ENCODE measurements at regions of chr11 and their contacts with region 1.

Region 1: DNA sequence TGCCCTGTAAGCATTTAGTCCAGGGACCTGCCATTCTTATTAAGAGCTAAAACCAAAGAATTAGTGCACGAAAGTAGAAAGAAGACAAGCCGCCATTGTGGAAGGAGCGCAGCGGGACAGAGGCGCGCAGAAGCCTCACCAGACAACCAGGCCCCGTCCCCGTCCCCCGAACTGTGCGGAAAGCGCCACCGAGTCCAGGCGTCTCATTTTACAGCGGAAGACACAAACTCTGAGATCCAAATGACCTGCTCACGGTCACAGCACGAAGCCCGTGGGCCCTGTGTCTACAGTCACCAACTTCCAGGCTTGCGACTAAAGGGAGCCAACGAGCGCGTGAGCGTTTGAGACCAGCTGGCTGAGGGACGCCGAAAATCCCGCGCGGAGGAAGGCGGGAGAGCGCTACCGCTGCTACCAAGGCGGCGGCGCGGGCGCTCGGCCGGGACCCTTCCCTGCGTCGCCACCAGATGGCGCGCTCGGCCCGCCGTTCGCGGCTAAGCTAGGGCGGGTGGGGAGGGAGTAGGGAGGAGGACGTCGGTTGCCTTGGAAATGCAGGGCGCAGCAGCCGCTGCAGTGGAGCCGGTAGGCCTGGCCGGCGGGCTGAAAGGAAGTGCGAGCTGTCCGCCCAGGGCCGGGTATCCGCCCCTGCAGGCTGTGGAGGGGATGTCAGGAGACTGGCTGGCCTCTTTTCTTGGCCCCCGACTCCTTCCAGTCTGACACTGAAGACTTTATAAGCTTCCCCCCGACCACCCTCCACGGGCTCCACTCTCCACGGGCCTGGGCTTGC is 434 bp upstream of the CCDC83 start:
- DNase-seq: peak; percentile 94
- ATAC-seq: peak; percentile 96
- H3K4me3 Mint-ChIP-seq: peak overlapping the region; percentile 76
- H3K27ac Mint-ChIP-seq: peak overlapping the region; percentile 49; the same call in 1 of the 2 replicates
- H3K4me1 Mint-ChIP-seq: peaks cover 11% of the 10 kb centered on the region
- H3K27me3 Mint-ChIP-seq: peaks cover 5% of the 10 kb centered on the region
- CTCF ChIP-seq: peak; percentile 94

Region 2: DNA sequence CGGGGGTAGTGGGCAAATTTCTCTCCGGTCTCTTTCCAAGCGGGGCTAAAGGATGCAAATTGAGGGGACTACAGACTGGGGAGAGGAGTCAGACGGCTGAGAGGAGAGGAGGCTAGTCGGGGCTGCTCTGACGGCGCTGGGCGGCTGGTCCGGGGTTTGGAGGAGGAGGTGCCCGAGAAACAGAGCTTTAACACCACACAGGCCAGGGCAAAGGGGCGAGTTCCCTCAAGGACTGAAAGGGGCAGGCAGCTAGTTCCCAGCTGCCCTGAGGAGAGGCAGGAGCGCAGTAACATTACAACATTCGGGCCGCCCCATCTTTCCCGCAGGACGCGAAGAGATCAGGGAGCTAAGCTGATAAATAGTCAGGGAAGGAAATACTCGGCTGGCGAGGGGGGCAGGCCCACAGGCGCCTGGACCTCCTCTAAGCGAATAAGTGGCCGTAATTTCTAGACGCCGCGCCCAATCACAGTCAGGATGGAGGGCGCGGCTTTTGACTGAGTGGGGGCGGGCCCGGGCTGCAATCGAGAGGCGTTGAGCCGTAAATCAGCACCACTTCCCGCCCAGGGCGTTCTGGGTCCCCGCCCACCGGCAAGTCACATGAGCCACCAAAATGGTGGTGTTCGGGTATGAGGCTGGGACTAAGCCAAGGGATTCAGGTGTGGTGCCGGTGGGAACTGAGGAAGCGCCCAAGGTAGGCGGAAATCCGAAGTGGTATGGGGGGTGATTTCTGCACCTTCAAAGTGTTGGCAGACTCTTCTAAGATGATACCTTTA is 226.6 kb before region 1 on chr11 and contains the start of gene TMEM126B:
- CTCF ChIA-PET with region 1: interaction called, 12 read pairs
- POLR2A ChIA-PET with region 1: no interaction called
- DNase-seq: peak; percentile 97
- ATAC-seq: peak; percentile 99
- H3K4me3 Mint-ChIP-seq: peak within 1 kb of the TSS; percentile 100
- H3K27ac Mint-ChIP-seq: peak within 1 kb of the TSS; percentile 98
- H3K4me1 Mint-ChIP-seq: peaks cover 28% of the 10 kb centered on the region
- H3K27me3 Mint-ChIP-seq: no peaks in the 10 kb centered on the region
- CTCF ChIP-seq: no peak
- total RNA-seq, gene TMEM126B: 52.8 to 65.8 TPM (median 63.8 TPM) in 3 replicates

Region 3: DNA sequence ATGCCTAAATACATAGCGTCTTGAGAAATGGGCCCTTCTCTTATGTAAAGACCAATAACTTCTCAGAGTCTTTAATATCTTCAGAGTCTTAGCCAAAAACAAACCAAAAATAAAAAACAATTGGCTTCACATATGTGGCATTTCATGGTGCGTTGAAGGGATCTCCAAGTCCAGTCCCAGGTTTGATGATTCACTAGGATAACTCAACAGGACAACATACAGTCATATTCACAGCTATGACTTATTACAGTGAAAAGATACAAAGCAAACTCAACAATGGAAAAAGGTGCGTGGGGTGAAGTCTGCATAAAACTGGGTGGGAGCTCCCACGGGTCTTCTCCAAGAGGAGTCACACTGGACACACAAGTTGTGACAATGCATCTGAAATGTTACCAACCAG is 56.4 kb before region 1 on chr11:
- CTCF ChIA-PET with region 1: no interaction called
- POLR2A ChIA-PET with region 1: no interaction called
- DNase-seq: no peak
- ATAC-seq: no peak
- H3K4me3 Mint-ChIP-seq: no peak overlapping the region
- H3K27ac Mint-ChIP-seq: no peak overlapping the region
- H3K4me1 Mint-ChIP-seq: peaks cover 2% of the 10 kb centered on the region; the same call in 1 of the 2 replicates
- H3K27me3 Mint-ChIP-seq: no peaks in the 10 kb centered on the region; the same call in 1 of the 2 replicates
- CTCF ChIP-seq: no peak

Region 4: DNA sequence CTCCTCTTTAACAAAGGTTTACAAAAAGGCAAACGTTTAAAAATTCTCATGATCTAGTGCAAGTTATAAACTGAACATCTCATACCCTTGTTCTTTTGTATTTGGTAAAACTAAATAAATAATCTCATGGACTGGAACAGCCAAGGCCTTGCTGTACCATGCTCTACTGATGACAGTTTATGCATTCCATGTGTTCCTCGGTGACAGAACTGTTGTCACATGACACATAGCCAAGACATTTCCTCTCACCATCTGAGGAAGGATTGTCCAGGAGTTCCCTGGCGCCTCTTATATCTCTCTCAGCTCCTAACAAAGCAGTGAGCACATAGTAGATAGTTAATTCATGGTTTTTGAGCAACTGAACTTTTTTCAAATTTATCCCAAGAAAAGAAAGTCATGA is 13.0 kb after region 1 on chr11:
- CTCF ChIA-PET with region 1: interaction called, 27 read pairs
- POLR2A ChIA-PET with region 1: no interaction called
- DNase-seq: no peak
- ATAC-seq: no peak
- H3K4me3 Mint-ChIP-seq: no peak overlapping the region
- H3K27ac Mint-ChIP-seq: no peak overlapping the region
- H3K4me1 Mint-ChIP-seq: no peaks in the 10 kb centered on the region
- H3K27me3 Mint-ChIP-seq: no peaks in the 10 kb centered on the region
- CTCF ChIP-seq: no peak

Region 5: GRCh38 chr11:85922367-85922766 is 67.6 kb after region 1 on chr11:
- CTCF ChIA-PET with region 1: interaction called, 13 read pairs
- POLR2A ChIA-PET with region 1: no interaction called
- DNase-seq: no peak
- ATAC-seq: no peak
- H3K4me3 Mint-ChIP-seq: no peak overlapping the region
- H3K27ac Mint-ChIP-seq: no peak overlapping the region
- H3K4me1 Mint-ChIP-seq: peaks cover 22% of the 10 kb centered on the region
- H3K27me3 Mint-ChIP-seq: peaks cover 14% of the 10 kb centered on the region
- CTCF ChIP-seq: no peak

Region 6: GRCh38 chr11:86218125-86219084 is 363.7 kb after region 1 on chr11:
- CTCF ChIA-PET with region 1: interaction called, 15 read pairs
- POLR2A ChIA-PET with region 1: no interaction called
- DNase-seq: peak; percentile 71
- ATAC-seq: peak; percentile 96
- H3K4me3 Mint-ChIP-seq: no peak overlapping the region
- H3K27ac Mint-ChIP-seq: no peak overlapping the region
- H3K4me1 Mint-ChIP-seq: peaks cover 9% of the 10 kb centered on the region
- H3K27me3 Mint-ChIP-seq: peaks cover 2% of the 10 kb centered on the region; the same call in 1 of the 2 replicates
- CTCF ChIP-seq: peak; percentile 51

Measured in WTC11 (cell line).